Activated B cell treated with CpG ODN at 0.5 μM for 24 hours (primary cell): ENCODE measurements at regions of chr6 and their contacts with region 1.

Region 1: DNA sequence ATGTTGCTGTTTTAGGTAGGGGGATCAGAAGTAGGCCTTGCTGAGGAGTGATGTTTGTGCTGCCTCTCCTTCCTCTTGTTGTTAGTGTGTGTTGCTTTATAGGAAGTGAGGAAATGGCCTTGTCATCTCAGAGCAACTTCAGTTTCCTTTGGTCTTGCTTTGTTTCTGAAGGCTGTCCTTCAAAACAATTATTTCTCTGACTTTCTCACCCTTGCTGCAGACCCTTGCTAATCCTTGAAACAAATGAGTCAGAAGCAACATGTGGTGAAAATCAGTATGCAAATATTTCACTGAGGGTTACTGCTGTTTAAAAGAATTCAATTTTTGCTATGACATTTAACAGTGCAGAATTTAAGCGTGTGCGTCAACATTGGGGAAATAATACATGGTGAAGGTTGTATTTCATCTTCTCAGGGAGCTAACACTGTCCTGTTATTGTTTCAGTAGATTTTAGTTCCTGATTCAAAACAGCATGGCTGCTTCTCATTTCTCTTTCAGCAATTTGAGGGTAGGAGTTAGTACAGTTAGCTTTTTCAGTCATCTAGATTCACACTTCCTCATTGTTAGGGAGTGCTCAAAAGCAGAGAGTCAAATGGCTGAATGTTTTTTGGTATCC is 13.8 kb downstream of the RNF144B start:
- DNase-seq: no peak
- ATAC-seq: peak; percentile 90
- H3K4me3 Mint-ChIP-seq: peak overlapping the region; percentile 59
- H3K27ac Mint-ChIP-seq: peak overlapping the region; percentile 93
- H3K4me1 Mint-ChIP-seq: peaks cover 40% of the 10 kb centered on the region
- H3K27me3 Mint-ChIP-seq: no peaks in the 10 kb centered on the region
- CTCF ChIP-seq: no peak

Region 2: GRCh38 chr6:18323935-18324705 is 76.8 kb before region 1 on chr6:
- CTCF ChIA-PET with region 1: interaction called, 5 read pairs
- POLR2A ChIA-PET with region 1: interaction called, 24 read pairs
- intact Hi-C with region 1: no loop called
- DNase-seq: no peak
- ATAC-seq: peak; percentile 62
- H3K4me3 Mint-ChIP-seq: no peak overlapping the region
- H3K27ac Mint-ChIP-seq: no peak overlapping the region
- H3K4me1 Mint-ChIP-seq: peaks cover 34% of the 10 kb centered on the region
- H3K27me3 Mint-ChIP-seq: no peaks in the 10 kb centered on the region
- CTCF ChIP-seq: peak; percentile 44

Region 3: GRCh38 chr6:18330548-18331081 is 70.3 kb before region 1 on chr6:
- CTCF ChIA-PET with region 1: interaction called, 3 read pairs
- POLR2A ChIA-PET with region 1: interaction called, 24 read pairs
- intact Hi-C with region 1: loop called (anchors 1 kb)
- DNase-seq: peak; percentile 24
- ATAC-seq: peak; percentile 62
- H3K4me3 Mint-ChIP-seq: peak overlapping the region; percentile 29
- H3K27ac Mint-ChIP-seq: peak overlapping the region; percentile 84
- H3K4me1 Mint-ChIP-seq: peaks cover 53% of the 10 kb centered on the region
- H3K27me3 Mint-ChIP-seq: no peaks in the 10 kb centered on the region
- CTCF ChIP-seq: no peak

Region 4: DNA sequence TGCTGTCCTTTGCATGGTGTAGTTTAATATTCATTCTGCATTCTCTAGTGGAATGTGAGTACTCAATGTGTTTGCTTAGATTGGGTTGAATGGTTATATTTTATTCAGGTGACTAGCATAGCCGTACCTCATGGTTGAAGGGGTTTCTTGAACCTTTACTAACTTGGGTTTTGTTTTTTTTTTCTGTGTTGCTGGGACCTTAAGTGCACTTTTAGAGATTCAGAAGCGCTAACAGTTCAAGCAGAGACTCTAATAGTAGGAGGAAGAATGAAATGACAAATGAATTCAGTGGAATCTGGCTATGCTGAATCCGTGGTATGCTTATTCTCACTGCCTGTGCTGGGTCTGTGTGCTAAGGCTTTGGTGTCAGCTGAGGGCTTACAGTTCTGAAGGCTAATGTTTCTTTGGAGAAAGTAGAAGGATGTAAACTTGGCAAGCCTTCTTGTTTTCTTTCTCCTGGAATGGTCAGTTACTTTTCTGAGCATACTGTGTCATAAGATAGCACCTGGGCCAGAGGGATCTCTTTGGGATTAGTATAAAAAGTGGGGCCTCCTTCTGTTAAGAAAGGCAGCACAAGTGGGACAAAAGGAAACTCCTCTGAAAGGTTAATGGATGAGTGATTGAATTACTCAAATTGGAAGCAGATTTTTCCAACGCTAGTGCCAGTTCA is 14.9 kb after region 1 on chr6:
- CTCF ChIA-PET with region 1: no interaction called
- POLR2A ChIA-PET with region 1: interaction called, 7 read pairs
- intact Hi-C with region 1: loop called (anchors 1 kb)
- DNase-seq: no peak
- ATAC-seq: no peak
- H3K4me3 Mint-ChIP-seq: no peak overlapping the region
- H3K27ac Mint-ChIP-seq: no peak overlapping the region
- H3K4me1 Mint-ChIP-seq: peaks cover 41% of the 10 kb centered on the region
- H3K27me3 Mint-ChIP-seq: no peaks in the 10 kb centered on the region
- CTCF ChIP-seq: no peak

Region 5: DNA sequence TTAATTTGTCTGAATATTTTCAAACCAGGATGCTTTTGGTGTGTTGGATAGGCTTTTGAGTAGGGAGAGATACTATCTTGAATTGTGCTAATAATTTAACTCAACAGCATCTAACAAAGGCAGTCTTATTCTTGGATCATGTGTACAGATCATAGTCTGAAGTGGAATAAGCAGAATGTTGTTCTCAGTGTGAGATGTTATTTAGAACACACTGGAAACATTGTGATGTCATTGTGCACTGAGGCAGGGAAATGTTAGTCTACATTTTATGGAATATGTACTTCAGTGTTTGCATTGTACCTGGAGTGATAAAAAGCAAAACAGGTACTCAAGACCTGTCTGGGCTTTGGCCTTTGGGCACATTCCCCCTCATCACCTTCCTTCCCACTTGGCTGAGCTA is 21.2 kb after region 1 on chr6:
- CTCF ChIA-PET with region 1: no interaction called
- POLR2A ChIA-PET with region 1: no interaction called
- intact Hi-C with region 1: loop called (anchors 2 kb)
- DNase-seq: no peak
- ATAC-seq: no peak
- H3K4me3 Mint-ChIP-seq: no peak overlapping the region
- H3K27ac Mint-ChIP-seq: no peak overlapping the region
- H3K4me1 Mint-ChIP-seq: peaks cover 30% of the 10 kb centered on the region
- H3K27me3 Mint-ChIP-seq: no peaks in the 10 kb centered on the region
- CTCF ChIP-seq: no peak

Region 6: GRCh38 chr6:18477301-18477941 is 76.5 kb after region 1 on chr6:
- CTCF ChIA-PET with region 1: interaction called, 3 read pairs
- POLR2A ChIA-PET with region 1: no interaction called
- intact Hi-C with region 1: loop called (anchors 5 kb)
- DNase-seq: no peak
- ATAC-seq: peak; percentile 80
- H3K4me3 Mint-ChIP-seq: peak overlapping the region; percentile 55
- H3K27ac Mint-ChIP-seq: peak overlapping the region; percentile 82
- H3K4me1 Mint-ChIP-seq: peaks cover 46% of the 10 kb centered on the region
- H3K27me3 Mint-ChIP-seq: no peaks in the 10 kb centered on the region
- CTCF ChIP-seq: no peak

Region 7: DNA sequence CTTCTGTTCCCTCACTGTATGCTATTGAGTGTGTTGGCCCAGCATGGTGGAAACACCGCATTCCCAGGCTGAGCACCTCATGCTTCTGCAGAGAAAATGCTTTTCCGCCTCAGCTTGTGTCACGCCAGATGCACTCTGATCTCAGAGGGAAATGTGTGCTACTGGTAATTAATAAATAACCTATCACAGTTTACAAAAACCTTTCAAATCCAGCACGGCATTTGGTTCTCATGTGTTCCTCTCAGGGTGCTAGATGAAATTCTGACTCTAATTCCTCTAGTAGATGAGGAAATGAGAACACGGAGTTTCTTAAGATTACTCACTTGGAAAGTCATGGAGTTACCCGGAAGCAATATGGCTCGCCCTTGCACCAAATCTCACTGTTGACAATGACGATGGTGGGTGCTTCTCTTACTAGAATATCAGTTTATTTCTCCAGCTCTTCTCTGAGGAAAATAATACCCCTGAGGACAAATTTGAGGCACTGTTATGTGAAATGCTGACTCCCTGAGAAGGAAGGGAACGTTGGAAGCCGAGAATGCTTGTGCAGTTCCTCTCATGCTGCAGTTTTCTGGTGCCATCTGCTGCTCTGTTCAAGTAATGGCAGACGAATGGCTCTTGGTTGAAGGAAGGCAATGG is 102.8 kb after region 1 on chr6:
- CTCF ChIA-PET with region 1: interaction called, 8 read pairs
- POLR2A ChIA-PET with region 1: interaction called, 5 read pairs
- intact Hi-C with region 1: loop called (anchors 5 kb)
- DNase-seq: no peak
- ATAC-seq: peak; percentile 88
- H3K4me3 Mint-ChIP-seq: peak overlapping the region; percentile 73
- H3K27ac Mint-ChIP-seq: no peak overlapping the region
- H3K4me1 Mint-ChIP-seq: peaks cover 14% of the 10 kb centered on the region
- H3K27me3 Mint-ChIP-seq: no peaks in the 10 kb centered on the region
- CTCF ChIP-seq: peak; percentile 79